ENCODE measurements at regions of chr13 and their contacts with region 1.

Region 1: GRCh38 chr13:20713751-20714150 is 10.3 kb downstream of the IL17D start:
- DNase-seq: no peak
- H3K4me3 Mint-ChIP-seq: no peak overlapping the region
- H3K27ac Mint-ChIP-seq: no peak overlapping the region
- H3K4me1 Mint-ChIP-seq: peaks cover 6% of the 10 kb centered on the region
- H3K27me3 Mint-ChIP-seq: peaks cover 10% of the 10 kb centered on the region

Region 2: DNA sequence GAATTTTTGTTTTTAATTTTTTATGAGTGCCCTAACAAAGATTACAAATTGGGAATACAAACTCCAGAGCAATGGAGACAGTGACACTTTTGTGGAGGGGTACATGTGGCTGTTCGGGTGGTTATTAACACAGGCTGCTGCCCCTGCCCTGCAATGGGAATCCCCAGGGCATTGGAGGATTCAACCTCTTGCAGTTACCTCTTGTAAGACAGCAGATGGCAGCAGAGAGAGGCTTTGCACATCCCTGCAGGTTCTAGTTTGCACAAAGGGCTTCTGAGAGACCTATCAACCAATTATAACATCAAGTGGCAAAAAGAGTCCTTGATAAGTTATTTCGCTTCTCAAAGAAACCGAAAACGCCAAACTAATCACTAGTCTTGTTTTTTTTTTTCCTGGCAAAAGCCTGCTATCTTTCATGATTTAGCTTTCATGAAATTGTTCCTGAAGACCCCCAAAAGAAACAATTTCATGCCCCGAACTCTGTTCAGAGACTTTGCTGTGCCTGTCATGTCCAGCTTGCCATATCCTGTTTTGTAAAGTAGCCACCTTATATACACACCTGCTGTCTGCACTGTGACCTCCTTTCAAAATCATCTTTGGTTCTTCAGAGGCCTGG is 531.4 kb before region 1 on chr13:
- CTCF ChIA-PET with region 1: no interaction called
- POLR2A ChIA-PET with region 1: no interaction called
- intact Hi-C with region 1: loop called (anchors 2 kb)
- DNase-seq: peak; percentile 59
- H3K4me3 Mint-ChIP-seq: no peak overlapping the region
- H3K27ac Mint-ChIP-seq: no peak overlapping the region
- H3K4me1 Mint-ChIP-seq: no peaks in the 10 kb centered on the region
- H3K27me3 Mint-ChIP-seq: peaks cover 37% of the 10 kb centered on the region

Region 3: GRCh38 chr13:20924758-20925394 is 211.1 kb after region 1 on chr13:
- CTCF ChIA-PET with region 1: interaction called, 11 read pairs
- POLR2A ChIA-PET with region 1: no interaction called
- intact Hi-C with region 1: loop called (anchors 1 kb)
- DNase-seq: peak; percentile 77
- H3K4me3 Mint-ChIP-seq: no peak overlapping the region
- H3K27ac Mint-ChIP-seq: no peak overlapping the region
- H3K4me1 Mint-ChIP-seq: no peaks in the 10 kb centered on the region
- H3K27me3 Mint-ChIP-seq: no peaks in the 10 kb centered on the region

Measured in activated CD4-positive, alpha-beta memory T cell treated with anti-CD3 and anti-CD28 coated beads for 36 hours (primary cell).